ENCODE measurements at regions of chr14 and their contacts with region 1.

Region 1: GRCh38 chr14:21269252-21270046 is at the start of gene HNRNPC:
- DNase-seq: peak; percentile 100
- ATAC-seq: peak; percentile 85
- H3K4me3 ChIP-seq: peak within 1 kb of the TSS; percentile 68 to 89
- H3K4me3 Mint-ChIP-seq: peak within 1 kb of the TSS; percentile 99
- H3K27ac ChIP-seq: peak within 1 kb of the TSS; percentile 80 to 96
- H3K27ac Mint-ChIP-seq: peak within 1 kb of the TSS; percentile 100
- H3K4me1 ChIP-seq: peaks cover 28% of the 10 kb centered on the region
- H3K4me1 Mint-ChIP-seq: peaks cover 35% of the 10 kb centered on the region
- H3K27me3 ChIP-seq: no peaks in the 10 kb centered on the region
- H3K27me3 Mint-ChIP-seq: no peaks in the 10 kb centered on the region
- CTCF ChIP-seq: no peak
- total RNA-seq, gene HNRNPC: 621 to 624 TPM

Region 2: DNA sequence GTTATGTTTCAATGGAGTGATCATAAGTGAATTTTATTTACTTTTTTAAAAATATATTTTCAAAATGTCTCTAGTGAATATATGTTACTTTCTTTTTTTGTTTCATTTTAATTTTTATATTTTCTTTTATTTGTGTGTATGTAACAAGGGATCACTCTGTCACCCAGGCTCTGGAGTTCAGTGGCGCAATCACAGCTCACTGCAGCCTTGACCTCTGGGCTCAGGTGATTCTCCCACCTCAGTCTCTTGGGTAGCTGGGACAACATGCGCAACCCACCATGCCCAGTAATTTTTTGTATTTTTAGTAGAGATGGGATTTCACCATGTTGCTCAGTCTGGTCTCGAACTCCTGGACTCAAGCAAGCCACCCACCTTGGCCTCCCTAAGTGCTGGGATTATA is 150.5 kb before region 1 on chr14:
- CTCF ChIA-PET with region 1: no interaction called
- POLR2A ChIA-PET with region 1: no interaction called
- intact Hi-C with region 1: no loop called
- DNase-seq: no peak
- ATAC-seq: no peak
- H3K4me3 ChIP-seq: no peak overlapping the region
- H3K4me3 Mint-ChIP-seq: no peak overlapping the region
- H3K27ac ChIP-seq: no peak overlapping the region
- H3K27ac Mint-ChIP-seq: no peak overlapping the region
- H3K4me1 ChIP-seq: no peaks in the 10 kb centered on the region
- H3K4me1 Mint-ChIP-seq: no peaks in the 10 kb centered on the region
- H3K27me3 ChIP-seq: no peaks in the 10 kb centered on the region
- H3K27me3 Mint-ChIP-seq: peaks cover 14% of the 10 kb centered on the region
- CTCF ChIP-seq: no peak

Region 3: GRCh38 chr14:21257394-21257909 is 12.0 kb before region 1 on chr14:
- CTCF ChIA-PET with region 1: interaction called, 6 read pairs
- POLR2A ChIA-PET with region 1: interaction called, 11 read pairs
- intact Hi-C with region 1: loop called in 1 of 2 experiments (anchors 1 kb)
- DNase-seq: peak in 1 of 9 experiments; percentile 42
- ATAC-seq: peak; percentile 18
- H3K4me3 ChIP-seq: peak overlapping the region in 1 of 2 experiments; percentile 29
- H3K4me3 Mint-ChIP-seq: peak overlapping the region; percentile 72
- H3K27ac ChIP-seq: peak overlapping the region; percentile 15 to 41
- H3K27ac Mint-ChIP-seq: peak overlapping the region; percentile 81
- H3K4me1 ChIP-seq: peaks cover 79% of the 10 kb centered on the region
- H3K4me1 Mint-ChIP-seq: peaks cover 79% of the 10 kb centered on the region
- H3K27me3 ChIP-seq: no peaks in the 10 kb centered on the region
- H3K27me3 Mint-ChIP-seq: no peaks in the 10 kb centered on the region
- CTCF ChIP-seq: no peak

Region 4: GRCh38 chr14:21383848-21384493 is 114.5 kb after region 1 on chr14 and contains the start of gene SUPT16H:
- CTCF ChIA-PET with region 1: no interaction called
- POLR2A ChIA-PET with region 1: interaction called, 6 read pairs
- intact Hi-C with region 1: loop called (anchors 1 kb)
- DNase-seq: peak; percentile 83 to 97 (median 93)
- ATAC-seq: peak; percentile 88
- H3K4me3 ChIP-seq: peak within 1 kb of the TSS; percentile 87 to 91
- H3K4me3 Mint-ChIP-seq: peak within 1 kb of the TSS; percentile 98
- H3K27ac ChIP-seq: peak within 1 kb of the TSS; percentile 89 to 96
- H3K27ac Mint-ChIP-seq: peak within 1 kb of the TSS; percentile 99
- H3K4me1 ChIP-seq: peaks cover 17% of the 10 kb centered on the region
- H3K4me1 Mint-ChIP-seq: peaks cover 43% of the 10 kb centered on the region
- H3K27me3 ChIP-seq: no peaks in the 10 kb centered on the region
- H3K27me3 Mint-ChIP-seq: no peaks in the 10 kb centered on the region
- CTCF ChIP-seq: no peak
- total RNA-seq, gene SUPT16H: 53.5 to 54.9 TPM

Region 5: DNA sequence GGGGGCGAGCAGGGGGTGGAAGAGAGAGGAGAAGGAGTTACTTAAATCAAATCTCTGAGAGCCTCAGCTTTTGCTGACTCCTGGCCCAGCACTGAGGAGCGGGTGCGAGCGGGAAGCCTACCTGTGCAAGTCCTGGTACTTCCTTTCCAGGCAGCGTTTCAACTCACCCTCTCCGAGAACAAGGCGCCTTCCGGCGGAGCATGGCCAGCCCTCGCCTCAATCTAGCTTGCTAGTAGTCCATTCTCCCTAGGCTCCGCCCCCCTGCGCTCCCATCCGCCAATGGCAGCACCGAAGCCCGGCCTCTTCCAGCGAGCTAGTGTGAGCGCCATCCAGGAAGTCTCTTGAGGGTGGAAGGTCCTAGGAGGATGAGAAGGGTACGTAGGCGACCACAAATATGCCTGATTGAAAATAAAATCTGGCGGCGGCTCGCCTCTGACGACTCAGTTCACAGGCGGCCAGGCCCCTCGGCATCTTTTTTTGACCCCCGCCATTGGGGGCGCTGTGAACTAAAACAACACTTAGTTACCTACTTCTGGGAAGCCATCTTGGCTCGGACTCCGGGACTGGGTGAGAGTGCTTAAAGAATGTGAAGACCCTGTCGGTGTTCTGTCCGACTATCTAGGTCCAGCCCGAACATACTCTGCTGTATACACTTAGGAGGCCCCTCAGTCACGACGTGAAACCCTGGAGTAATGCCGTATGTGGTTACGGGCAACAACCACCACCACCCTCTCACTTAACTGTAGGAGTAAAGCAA is 186.6 kb after region 1 on chr14 and contains the start of gene CHD8:
- CTCF ChIA-PET with region 1: interaction called, 3 read pairs
- POLR2A ChIA-PET with region 1: no interaction called
- intact Hi-C with region 1: loop called in 1 of 2 experiments (anchors 1 kb)
- DNase-seq: peak; percentile 98 to 100 (median 99)
- ATAC-seq: peak; percentile 96
- H3K4me3 ChIP-seq: peak within 1 kb of the TSS; percentile 85 to 97
- H3K4me3 Mint-ChIP-seq: peak within 1 kb of the TSS; percentile 100
- H3K27ac ChIP-seq: peak within 1 kb of the TSS; percentile 86 to 98
- H3K27ac Mint-ChIP-seq: peak within 1 kb of the TSS; percentile 100
- H3K4me1 ChIP-seq: peaks cover 21% of the 10 kb centered on the region
- H3K4me1 Mint-ChIP-seq: peaks cover 36% of the 10 kb centered on the region
- H3K27me3 ChIP-seq: no peaks in the 10 kb centered on the region
- H3K27me3 Mint-ChIP-seq: no peaks in the 10 kb centered on the region
- CTCF ChIP-seq: peak; percentile 60
- total RNA-seq, gene CHD8: 132 to 144 TPM

Region 6: DNA sequence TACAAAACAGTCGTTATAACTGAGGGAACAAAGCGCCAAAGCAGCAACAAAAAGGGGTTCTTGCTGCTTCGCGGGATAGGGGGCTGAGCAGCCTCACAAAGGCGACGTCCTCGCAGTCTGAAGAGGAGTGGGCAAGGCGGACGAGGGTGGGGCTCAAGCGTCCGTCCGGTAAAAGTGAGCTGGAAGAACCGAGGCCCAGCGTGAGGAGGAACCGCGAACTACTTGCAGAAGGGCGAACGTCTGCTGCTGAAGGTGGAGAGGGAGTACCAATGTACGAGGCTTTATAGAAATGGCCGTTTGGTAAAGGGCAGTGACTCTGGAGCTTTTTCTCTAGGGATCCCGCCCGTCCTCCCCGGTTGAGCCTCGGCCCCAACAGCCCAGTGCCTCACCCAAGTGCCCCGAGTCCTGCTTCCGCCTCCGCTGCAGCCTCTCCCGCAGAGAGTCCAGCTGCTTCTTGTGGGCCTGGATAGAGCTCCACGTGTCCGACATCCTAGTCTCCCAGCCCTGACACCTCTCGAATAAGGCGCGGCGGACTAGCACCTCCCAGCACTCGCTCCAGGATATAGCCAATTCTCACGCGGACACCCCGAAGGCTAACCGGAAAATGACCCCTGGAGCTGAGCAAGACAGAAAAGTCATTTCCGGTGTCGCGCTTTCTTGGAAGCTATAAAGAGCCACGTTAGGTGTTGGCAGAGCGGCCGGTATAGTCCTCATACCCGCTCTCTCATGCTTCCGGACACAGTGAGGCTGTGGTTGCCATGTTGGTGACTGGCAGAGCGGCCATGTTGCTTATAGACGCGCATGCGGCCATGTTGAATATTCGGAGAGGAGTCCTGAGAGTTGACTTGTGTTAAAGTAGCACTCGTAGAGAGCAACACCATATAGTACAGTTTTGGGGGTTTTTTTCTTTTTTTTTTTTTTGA is 241.5 kb after region 1 on chr14 and contains the start of gene METTL3:
- CTCF ChIA-PET with region 1: no interaction called
- POLR2A ChIA-PET with region 1: no interaction called
- intact Hi-C with region 1: loop called in 1 of 2 experiments (anchors 1 kb)
- DNase-seq: peak; percentile 87 to 98 (median 92)
- ATAC-seq: peak; percentile 99
- H3K4me3 ChIP-seq: peak within 1 kb of the TSS; percentile 85 to 90
- H3K4me3 Mint-ChIP-seq: peak within 1 kb of the TSS; percentile 99
- H3K27ac ChIP-seq: peak within 1 kb of the TSS; percentile 88 to 89
- H3K27ac Mint-ChIP-seq: peak within 1 kb of the TSS; percentile 99
- H3K4me1 ChIP-seq: peaks cover 22% of the 10 kb centered on the region
- H3K4me1 Mint-ChIP-seq: peaks cover 39% of the 10 kb centered on the region
- H3K27me3 ChIP-seq: no peaks in the 10 kb centered on the region
- H3K27me3 Mint-ChIP-seq: no peaks in the 10 kb centered on the region
- CTCF ChIP-seq: no peak
- total RNA-seq, gene METTL3: 23.7 to 26.5 TPM

Region 7: GRCh38 chr14:21686468-21686867 is 417.0 kb after region 1 on chr14:
- CTCF ChIA-PET with region 1: no interaction called
- POLR2A ChIA-PET with region 1: no interaction called
- intact Hi-C with region 1: no loop called
- DNase-seq: no peak
- ATAC-seq: no peak
- H3K4me3 ChIP-seq: no peak overlapping the region
- H3K4me3 Mint-ChIP-seq: no peak overlapping the region
- H3K27ac ChIP-seq: no peak overlapping the region
- H3K27ac Mint-ChIP-seq: no peak overlapping the region
- H3K4me1 ChIP-seq: no peaks in the 10 kb centered on the region
- H3K4me1 Mint-ChIP-seq: no peaks in the 10 kb centered on the region
- H3K27me3 ChIP-seq: no peaks in the 10 kb centered on the region
- H3K27me3 Mint-ChIP-seq: peaks cover 20% of the 10 kb centered on the region
- CTCF ChIP-seq: no peak

Measured in CD8-positive, alpha-beta T cell (primary cell).